Naive thymus-derived CD4-positive, alpha-beta T cell (primary cell): ENCODE measurements at regions of chr20 and their contacts with region 1.

Region 1: DNA sequence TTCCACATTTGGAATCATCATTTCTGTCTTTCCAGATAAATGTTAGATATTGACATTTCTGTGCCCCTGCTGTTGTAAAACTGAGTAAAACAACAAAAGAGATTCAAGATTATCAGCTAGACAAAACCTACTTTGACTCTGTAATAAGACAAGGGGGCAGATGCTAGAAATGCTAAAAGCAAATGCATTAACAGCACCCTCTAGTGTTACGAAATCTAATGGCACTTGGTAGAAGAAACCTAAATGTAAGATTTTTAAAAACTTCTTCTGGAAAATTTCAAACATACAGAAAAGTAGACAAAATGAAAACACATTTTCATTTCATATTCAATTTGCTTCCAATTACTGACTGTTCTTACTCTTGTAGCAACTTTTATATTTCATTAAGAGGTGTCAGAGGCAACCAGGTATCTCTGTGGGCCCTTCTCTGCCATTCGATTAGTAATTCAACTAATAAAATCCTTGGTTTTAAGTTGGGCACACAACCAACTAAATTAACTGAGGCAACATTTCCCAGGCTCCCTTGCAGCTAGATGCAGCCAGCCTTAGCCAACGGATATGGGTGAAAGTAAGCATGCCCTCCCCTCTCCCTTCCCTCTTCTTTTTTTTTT is 45.0 kb downstream of the SLC23A2 start:
- DNase-seq: peak in 7 of 9 donors; percentile 37 to 67 (median 55)
- ATAC-seq: peak; percentile 86
- H3K4me3 ChIP-seq: no peak overlapping the region
- H3K4me3 Mint-ChIP-seq: no peak overlapping the region
- H3K27ac ChIP-seq: no peak overlapping the region
- H3K27ac Mint-ChIP-seq: peak overlapping the region in 1 of 9 donors; percentile 4
- H3K4me1 ChIP-seq: peaks cover 1 to 2% of the 10 kb centered on the region in 2 donors
- H3K4me1 Mint-ChIP-seq: peaks cover under 1 to 19% (median 14%) of the 10 kb centered on the region in 7 donors
- H3K27me3 ChIP-seq: no peaks in the 10 kb centered on the region
- H3K27me3 Mint-ChIP-seq: no peaks in the 10 kb centered on the region

Region 2: DNA sequence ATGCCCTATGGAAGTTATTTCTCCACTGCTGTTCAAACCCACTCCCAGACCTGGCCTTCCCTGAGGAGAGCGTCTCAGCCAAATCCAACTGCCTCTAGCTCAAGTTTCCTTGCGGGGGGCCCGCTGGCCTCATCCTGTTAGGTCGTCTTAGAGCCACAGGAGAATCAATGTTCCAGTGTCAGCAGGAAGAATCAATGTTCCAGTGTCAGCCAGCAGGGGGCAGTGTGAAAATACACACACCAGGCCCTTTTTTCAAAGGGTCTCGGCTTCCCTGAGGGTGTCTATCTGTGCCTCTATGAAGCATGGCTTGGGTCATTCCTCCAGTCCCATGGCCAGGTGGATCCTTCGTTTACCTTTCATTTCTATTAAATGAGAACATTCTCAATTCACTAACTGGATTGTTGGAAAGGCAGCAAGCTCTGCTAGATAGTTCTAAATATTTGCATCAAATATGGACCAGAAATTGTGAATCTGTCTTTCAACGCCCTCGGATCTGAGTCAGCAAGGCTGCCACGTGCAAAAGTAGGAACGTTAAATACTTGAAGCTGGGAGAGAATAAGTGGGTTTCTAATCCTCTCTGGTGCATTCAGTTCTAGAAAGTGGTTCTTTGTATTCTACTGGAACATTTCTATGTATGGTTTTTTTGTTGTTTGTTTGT is 215.4 kb before region 1 on chr20:
- CTCF ChIA-PET with region 1: interaction called, 7 read pairs
- POLR2A ChIA-PET with region 1: interaction called, 3 read pairs
- intact Hi-C with region 1: loop called (anchors 1 kb)
- DNase-seq: peak; percentile 33 to 69 (median 57)
- ATAC-seq: peak; percentile 76
- H3K4me3 ChIP-seq: no peak overlapping the region
- H3K4me3 Mint-ChIP-seq: no peak overlapping the region
- H3K27ac ChIP-seq: no peak overlapping the region
- H3K27ac Mint-ChIP-seq: no peak overlapping the region
- H3K4me1 ChIP-seq: no peaks in the 10 kb centered on the region
- H3K4me1 Mint-ChIP-seq: peaks cover 0 to 8% (median 3%) of the 10 kb centered on the region in 7 donors
- H3K27me3 ChIP-seq: no peaks in the 10 kb centered on the region
- H3K27me3 Mint-ChIP-seq: peaks cover 4 to 24% (median 9%) of the 10 kb centered on the region in 5 donors

Region 3: DNA sequence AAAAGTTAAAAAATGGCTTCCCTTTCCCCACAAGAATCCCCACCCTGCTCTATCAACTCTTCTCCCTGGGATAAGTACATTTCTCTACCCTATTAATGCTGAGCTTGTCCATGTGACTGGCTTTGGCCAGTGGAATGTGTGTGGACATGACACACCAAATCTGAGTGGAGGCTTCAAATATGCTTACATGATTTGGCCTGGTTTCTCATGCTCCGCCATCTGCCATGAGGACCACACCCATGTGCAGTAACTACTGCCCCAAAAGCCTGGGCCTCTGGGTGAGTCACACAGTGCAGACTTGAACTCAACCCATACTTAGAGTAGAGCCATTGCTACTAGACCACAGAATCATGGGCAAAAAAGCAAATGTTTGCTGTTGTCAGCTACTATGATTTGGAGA is 169.2 kb before region 1 on chr20:
- CTCF ChIA-PET with region 1: interaction called, 11 read pairs
- POLR2A ChIA-PET with region 1: no interaction called
- intact Hi-C with region 1: no loop called
- DNase-seq: no peak
- ATAC-seq: peak; percentile 80
- H3K4me3 ChIP-seq: no peak overlapping the region
- H3K4me3 Mint-ChIP-seq: no peak overlapping the region
- H3K27ac ChIP-seq: no peak overlapping the region
- H3K27ac Mint-ChIP-seq: peak overlapping the region in 8 of 9 donors; percentile 20 to 93 (median 48)
- H3K4me1 ChIP-seq: no peaks in the 10 kb centered on the region
- H3K4me1 Mint-ChIP-seq: peaks cover 0 to 30% (median under 1%) of the 10 kb centered on the region in 7 donors
- H3K27me3 ChIP-seq: no peaks in the 10 kb centered on the region
- H3K27me3 Mint-ChIP-seq: no peaks in the 10 kb centered on the region

Region 4: GRCh38 chr20:5191829-5192569 is 235.7 kb after region 1 on chr20:
- CTCF ChIA-PET with region 1: interaction called, 3 read pairs
- POLR2A ChIA-PET with region 1: no interaction called
- intact Hi-C with region 1: loop called in 1 of 2 experiments (anchors 5 kb)
- DNase-seq: peak in 7 of 9 donors; percentile 36 to 66 (median 54)
- ATAC-seq: peak; percentile 89
- H3K4me3 ChIP-seq: no peak overlapping the region
- H3K4me3 Mint-ChIP-seq: no peak overlapping the region
- H3K27ac ChIP-seq: peak overlapping the region; percentile 40
- H3K27ac Mint-ChIP-seq: peak overlapping the region in 8 of 9 donors; percentile 2 to 93 (median 80)
- H3K4me1 ChIP-seq: no peaks in the 10 kb centered on the region
- H3K4me1 Mint-ChIP-seq: peaks cover 0 to 18% (median 0%) of the 10 kb centered on the region in 7 donors
- H3K27me3 ChIP-seq: no peaks in the 10 kb centered on the region
- H3K27me3 Mint-ChIP-seq: no peaks in the 10 kb centered on the region